Aorta (tissue), 5 donors: ENCODE measurements at regions of chr16 and their contacts with region 1.

Region 1: DNA sequence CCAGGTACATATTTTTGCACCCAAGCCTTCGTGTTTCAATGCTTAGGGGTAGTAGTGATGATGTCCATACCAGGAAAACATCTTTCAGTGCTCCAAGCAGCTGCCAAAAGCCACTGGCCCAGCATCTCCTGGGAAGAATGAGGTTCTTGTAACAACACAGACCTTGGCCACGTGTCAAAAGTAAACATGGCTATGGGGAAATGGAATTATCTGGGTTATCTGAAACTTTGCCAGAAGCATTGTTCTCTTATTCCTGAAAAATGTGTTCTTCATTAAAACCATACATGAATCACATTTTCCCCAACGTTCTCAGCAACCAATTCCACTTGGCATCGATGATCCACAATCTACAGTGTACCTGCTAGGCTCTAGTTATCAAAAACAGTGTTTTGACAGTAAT is 524.2 kb upstream of the EEF2KMT start:
- DNase-seq: no peak
- ATAC-seq: no peak
- H3K4me3 ChIP-seq: no peak overlapping the region
- H3K27ac ChIP-seq: no peak overlapping the region
- H3K4me1 ChIP-seq: no peaks in the 10 kb centered on the region
- H3K27me3 ChIP-seq: no peaks in the 10 kb centered on the region

Region 2: DNA sequence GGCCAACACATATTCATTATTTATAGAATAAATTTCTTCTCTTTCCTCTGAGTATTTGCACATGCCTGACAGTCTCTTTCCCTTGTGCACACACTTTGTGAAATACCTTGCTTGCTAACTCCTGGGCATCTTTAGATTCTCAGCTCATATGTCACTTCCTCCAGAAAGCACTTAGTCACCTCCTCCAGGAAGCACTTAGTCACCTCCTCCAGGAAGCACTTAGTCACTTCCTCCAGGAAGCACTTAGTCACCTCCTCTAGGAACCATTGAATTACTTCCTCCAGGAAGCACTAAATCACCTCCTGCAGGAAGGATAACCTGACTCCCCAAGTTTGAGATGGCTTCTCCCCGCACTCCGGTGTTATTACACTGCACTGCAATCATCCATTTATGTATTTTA is 61.7 kb before region 1 on chr16:
- intact Hi-C with region 1: loop called in 1 of 2 experiments (anchors 10 kb)
- DNase-seq: no peak
- ATAC-seq: no peak
- H3K4me3 ChIP-seq: no peak overlapping the region
- H3K27ac ChIP-seq: no peak overlapping the region
- H3K4me1 ChIP-seq: no peaks in the 10 kb centered on the region
- H3K27me3 ChIP-seq: no peaks in the 10 kb centered on the region

Region 3: DNA sequence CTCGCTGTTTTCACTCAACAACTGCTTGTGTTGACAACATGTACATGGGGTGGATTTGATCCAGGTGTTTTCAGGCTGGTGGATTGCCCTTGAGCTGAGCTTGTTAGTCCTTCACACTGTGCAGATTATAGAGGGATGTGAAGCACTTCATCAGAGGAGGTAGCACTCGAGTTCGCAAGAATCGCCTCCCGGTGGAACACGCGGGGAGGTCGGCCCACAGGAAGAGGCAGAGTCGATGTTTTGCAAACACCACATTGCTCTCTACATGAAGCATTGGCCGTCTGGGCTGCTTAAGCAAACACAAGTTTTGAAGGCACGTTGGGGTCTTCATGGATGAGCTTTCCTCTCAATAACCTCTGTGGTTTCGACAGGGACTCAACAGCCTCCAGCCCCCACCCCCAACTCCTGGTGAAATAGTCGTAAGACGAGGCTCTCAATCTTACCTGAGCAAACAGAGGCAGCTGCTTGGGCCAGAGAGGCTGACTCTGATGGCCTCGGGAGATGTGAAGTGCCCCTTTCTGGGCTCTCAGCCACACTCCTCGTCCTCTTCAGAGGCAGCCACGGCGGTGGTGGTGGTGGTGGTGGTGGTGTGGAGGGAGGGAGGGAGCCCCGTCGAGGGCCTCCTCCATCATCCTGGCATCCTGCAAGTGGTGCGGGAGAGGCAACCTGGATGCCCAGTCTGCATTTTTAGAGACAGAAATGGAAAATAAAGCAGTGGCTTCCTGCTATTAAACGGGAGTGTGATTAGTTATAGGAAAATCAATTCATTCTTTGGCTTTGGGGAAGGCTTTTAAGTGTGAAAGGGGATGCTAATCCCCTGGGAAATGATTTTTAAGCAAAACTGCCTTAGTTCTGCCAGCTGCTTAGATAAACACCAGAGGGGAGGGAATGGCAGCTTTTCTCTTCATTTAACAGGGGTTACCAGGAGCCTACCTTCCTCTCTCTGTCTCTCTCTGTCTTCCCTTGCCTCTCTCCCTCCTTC is 28.2 kb after region 1 on chr16:
- intact Hi-C with region 1: no loop called
- DNase-seq: no peak
- ATAC-seq: no peak
- H3K4me3 ChIP-seq: no peak overlapping the region
- H3K27ac ChIP-seq: no peak overlapping the region
- H3K4me1 ChIP-seq: no peaks in the 10 kb centered on the region
- H3K27me3 ChIP-seq: no peaks in the 10 kb centered on the region

Region 4: DNA sequence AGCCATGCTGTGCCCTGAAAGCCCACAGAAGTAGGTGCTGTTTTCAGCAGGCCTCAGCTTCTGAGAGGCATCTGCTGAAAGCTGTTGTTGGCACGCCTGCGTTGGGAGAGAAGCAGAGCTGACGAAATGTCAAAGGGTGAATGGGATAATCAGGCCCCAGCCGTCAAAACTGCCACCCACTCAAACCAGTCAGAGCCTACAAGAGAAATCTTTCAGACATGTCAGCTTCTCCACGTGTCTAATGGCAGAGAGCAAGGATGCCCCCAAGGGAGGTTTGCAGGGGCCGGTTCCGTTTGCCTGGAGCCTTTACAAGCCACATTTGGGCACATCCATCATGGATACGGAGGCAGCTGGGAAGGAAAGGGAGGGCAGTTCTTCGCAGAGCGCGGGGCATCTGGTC is 44.0 kb after region 1 on chr16:
- intact Hi-C with region 1: no loop called
- DNase-seq: no peak
- ATAC-seq: no peak
- H3K4me3 ChIP-seq: no peak overlapping the region
- H3K27ac ChIP-seq: no peak overlapping the region
- H3K4me1 ChIP-seq: no peaks in the 10 kb centered on the region
- H3K27me3 ChIP-seq: peaks cover 0 to 1% of the 10 kb centered on the region in 2 donors